ENCODE measurements at regions of chr6 and their contacts with region 1.

Region 1: DNA sequence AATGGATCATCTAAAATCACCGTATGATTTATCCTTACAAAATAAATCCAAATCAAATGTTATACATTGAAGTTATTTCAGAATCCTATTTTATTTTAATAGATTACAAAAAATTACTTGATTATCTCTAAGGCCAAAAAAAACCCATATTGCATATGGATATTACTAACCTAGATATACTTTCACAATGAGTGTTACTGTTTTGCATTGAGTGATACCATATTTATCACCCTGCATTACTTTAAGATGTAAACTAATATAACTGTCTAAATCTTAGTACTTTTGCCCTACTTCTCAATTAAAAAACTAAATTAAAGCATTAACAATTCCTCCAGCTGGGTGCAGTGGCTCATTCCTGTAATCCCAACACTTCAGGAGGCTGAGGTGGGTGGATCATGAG is 11.1 kb downstream of the PPIL4 start:
- DNase-seq: no peak
- H3K4me3 ChIP-seq: no peak overlapping the region
- H3K27ac ChIP-seq: no peak overlapping the region
- H3K4me1 ChIP-seq: no peaks in the 10 kb centered on the region
- H3K27me3 ChIP-seq: no peaks in the 10 kb centered on the region
- CTCF ChIP-seq: no peak

Region 2: GRCh38 chr6:148915810-148916209 is 618.9 kb before region 1 on chr6:
- CTCF ChIA-PET with region 1: interaction called, 10 read pairs
- POLR2A ChIA-PET with region 1: no interaction called
- intact Hi-C with region 1: no loop called
- DNase-seq: no peak
- H3K4me3 ChIP-seq: no peak overlapping the region
- H3K27ac ChIP-seq: no peak overlapping the region
- H3K4me1 ChIP-seq: no peaks in the 10 kb centered on the region
- H3K27me3 ChIP-seq: no peaks in the 10 kb centered on the region
- CTCF ChIP-seq: no peak

Region 3: GRCh38 chr6:149651056-149651455 is 116.3 kb after region 1 on chr6:
- CTCF ChIA-PET with region 1: no interaction called
- POLR2A ChIA-PET with region 1: no interaction called
- intact Hi-C with region 1: no loop called
- DNase-seq: no peak
- H3K4me3 ChIP-seq: no peak overlapping the region
- H3K27ac ChIP-seq: no peak overlapping the region
- H3K4me1 ChIP-seq: peaks cover 13% of the 10 kb centered on the region
- H3K27me3 ChIP-seq: no peaks in the 10 kb centered on the region
- CTCF ChIP-seq: no peak

Region 4: DNA sequence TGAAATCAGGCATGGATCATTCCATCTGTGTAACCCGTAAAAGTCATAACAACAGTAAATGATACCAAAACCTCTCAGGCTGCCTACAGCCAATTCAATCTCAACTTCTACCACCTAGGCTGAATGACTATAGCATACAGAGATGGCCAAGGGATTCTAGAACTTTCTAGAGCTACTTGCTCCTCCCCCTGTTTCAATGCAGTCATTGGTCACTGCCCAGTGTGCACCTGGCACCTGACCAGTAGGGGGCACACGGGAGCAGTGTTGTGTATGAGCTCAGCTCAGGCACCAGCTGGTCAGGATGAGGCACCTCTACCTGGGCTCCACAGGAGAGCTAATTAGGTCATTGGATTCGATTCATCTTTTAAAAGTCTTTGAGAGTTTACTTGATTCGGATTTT is 1151.1 kb after region 1 on chr6:
- CTCF ChIA-PET with region 1: no interaction called
- POLR2A ChIA-PET with region 1: no interaction called
- intact Hi-C with region 1: no loop called
- DNase-seq: peak; percentile 12 to 43
- H3K4me3 ChIP-seq: no peak overlapping the region
- H3K27ac ChIP-seq: no peak overlapping the region
- H3K4me1 ChIP-seq: 0 out of 2 replicates have a peak, but pooled peaks cover 5% of the 10 kb centered on the region
- H3K27me3 ChIP-seq: no peaks in the 10 kb centered on the region
- CTCF ChIP-seq: peak; percentile 78